ENCODE measurements at regions of chr1 and their contacts with region 1.

Region 1: DNA sequence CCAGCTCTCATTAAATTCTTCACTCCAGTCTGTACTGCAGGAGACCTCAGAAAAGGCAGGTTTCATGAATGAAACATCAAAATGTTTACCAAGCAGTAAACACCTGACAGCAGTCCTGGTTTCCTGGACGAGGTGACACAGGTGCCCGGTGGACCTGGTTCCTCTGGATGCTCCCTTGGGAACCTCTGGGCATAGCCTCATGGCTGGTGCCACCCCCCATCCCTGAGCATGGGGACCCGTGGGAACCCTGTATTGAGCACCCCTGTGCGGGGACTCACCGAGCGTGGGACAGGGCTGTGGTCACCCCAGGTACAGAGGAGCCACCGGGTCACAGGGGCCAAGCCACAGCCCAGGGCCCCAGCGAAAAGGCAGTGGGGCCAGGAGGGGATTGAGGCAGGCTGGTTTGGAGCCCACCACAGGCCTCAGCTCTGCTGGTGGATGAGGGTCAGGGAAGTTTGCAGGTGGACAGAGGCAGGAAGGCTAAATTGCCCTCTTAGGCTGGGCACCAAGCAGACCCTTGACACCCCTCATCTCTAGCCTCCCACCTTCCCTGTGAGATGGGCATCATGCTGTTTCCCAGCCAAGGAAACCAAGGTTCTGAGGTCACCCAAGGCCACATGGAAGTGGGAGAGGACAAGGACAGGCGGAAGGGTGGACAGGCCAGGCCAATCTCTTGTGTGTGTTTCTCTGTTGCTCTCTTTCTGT is 158.4 kb downstream of the PTPRU start:
- DNase-seq: no peak
- H3K4me3 ChIP-seq: no peak overlapping the region
- H3K27ac ChIP-seq: no peak overlapping the region
- H3K4me1 ChIP-seq: no peaks in the 10 kb centered on the region
- H3K27me3 ChIP-seq: peaks cover 17% of the 10 kb centered on the region
- CTCF ChIP-seq: no peak
- EP300 ChIP-seq: no peak
- POLR2A ChIP-seq: no peak

Region 2: DNA sequence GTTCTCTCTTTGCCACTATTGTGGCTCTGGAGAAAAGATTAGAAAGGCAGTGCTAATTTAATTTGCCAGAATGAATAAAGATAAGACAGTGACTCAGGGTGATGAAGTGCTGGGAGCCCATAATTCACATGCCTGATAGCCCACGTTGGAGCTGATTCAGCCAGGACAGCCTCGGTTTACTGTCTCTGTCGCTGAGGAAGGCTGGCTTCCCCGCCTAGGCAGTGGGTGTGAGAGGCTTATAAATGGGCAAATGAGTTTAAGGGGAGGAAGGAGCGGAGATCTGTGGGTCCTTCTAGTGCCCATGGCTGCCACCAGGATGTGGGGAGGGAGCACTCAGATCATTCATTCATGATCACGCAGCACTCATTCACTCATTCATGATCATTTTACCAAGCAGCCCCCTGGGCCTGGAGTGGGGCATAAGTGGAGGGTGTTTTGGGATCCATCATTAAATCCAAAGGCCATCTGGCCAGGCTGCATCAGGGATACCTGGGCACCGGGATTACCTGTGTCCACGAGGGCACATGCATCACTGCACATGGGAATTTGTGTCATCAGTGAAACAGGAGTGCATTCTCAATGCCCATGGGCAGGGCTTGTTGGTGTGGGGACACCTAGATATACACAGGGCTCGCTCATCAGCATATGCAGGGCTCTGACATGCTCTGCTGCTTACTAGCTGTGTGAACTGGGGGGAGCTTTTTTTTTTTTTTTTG is 1013.4 kb after region 1 on chr1:
- in situ Hi-C with region 1: loop called (anchors 5 kb)
- intact Hi-C with region 1: no loop called
- DNase-seq: no peak
- H3K4me3 ChIP-seq: no peak overlapping the region
- H3K27ac ChIP-seq: no peak overlapping the region
- H3K4me1 ChIP-seq: no peaks in the 10 kb centered on the region
- H3K27me3 ChIP-seq: no peaks in the 10 kb centered on the region
- CTCF ChIP-seq: no peak
- EP300 ChIP-seq: no peak
- POLR2A ChIP-seq: no peak

Measured in transverse colon (tissue), 4 donors.